Pancreas (tissue), 10 donors: ENCODE measurements at regions of chr11 and their contacts with region 1.

Region 1: DNA sequence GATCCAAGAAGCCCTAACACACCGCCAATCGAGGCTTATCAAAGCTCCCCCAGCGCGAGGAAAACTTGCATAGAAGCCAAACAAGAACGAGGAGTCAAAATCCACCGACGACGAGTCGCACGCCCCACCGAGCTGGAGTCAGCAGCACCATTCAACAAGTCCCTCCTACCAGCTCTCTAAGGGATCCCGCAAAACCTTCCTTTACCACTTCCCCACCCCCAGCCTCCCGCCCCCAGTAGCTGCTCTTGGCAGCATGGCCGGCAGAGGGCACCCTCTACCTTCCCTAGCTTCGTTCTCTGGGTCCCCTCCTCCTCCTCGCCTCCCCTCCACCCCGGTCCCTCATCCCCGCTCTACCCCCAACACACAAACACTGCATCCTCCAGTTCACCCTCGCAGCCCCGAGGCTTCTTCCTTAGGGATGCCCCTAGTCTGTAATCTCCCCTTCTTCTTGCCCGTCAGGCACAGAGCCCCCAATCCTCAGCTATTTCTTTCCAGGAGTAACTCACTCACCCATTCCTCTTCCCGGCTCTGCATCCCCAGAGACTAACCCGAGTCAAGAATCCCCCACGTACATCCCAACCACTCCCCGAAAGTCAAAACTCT is 1.3 kb downstream of the BDNF start:
- DNase-seq: peak; percentile 56 to 86 (median 72)
- ATAC-seq: peak; percentile 83 to 93 (median 92)
- H3K4me3 ChIP-seq: peak overlapping the region in 1 of 4 donors; percentile 60
- H3K27ac ChIP-seq: no peak overlapping the region
- H3K4me1 ChIP-seq: peaks cover 4 to 15% (median 13%) of the 10 kb centered on the region in 3 donors
- H3K27me3 ChIP-seq: peaks cover 0 to 28% (median 8%) of the 10 kb centered on the region in 4 donors
- CTCF ChIP-seq: peak; percentile 57 to 72 (median 64)

Region 2: GRCh38 chr11:28529540-28530410 is 830.8 kb after region 1 on chr11:
- intact Hi-C with region 1: loop called in 2 of 3 experiments (anchors 5 to 10 kb)
- DNase-seq: no peak
- ATAC-seq: peak in 2 of 4 donors; percentile 55 to 63
- H3K4me3 ChIP-seq: no peak overlapping the region
- H3K27ac ChIP-seq: no peak overlapping the region
- H3K4me1 ChIP-seq: no peaks in the 10 kb centered on the region
- H3K27me3 ChIP-seq: no peaks in the 10 kb centered on the region
- CTCF ChIP-seq: peak in 3 of 4 donors; percentile 13 to 27 (median 20)

Region 3: GRCh38 chr11:28701760-28702449 is 1002.9 kb after region 1 on chr11:
- intact Hi-C with region 1: loop called in 1 of 3 experiments (anchors 10 kb)
- DNase-seq: peak in 2 of 6 donors; percentile 9 to 28
- ATAC-seq: peak in 2 of 4 donors; percentile 52 to 66
- H3K4me3 ChIP-seq: no peak overlapping the region
- H3K27ac ChIP-seq: no peak overlapping the region
- H3K4me1 ChIP-seq: no peaks in the 10 kb centered on the region
- H3K27me3 ChIP-seq: no peaks in the 10 kb centered on the region
- CTCF ChIP-seq: no peak

Region 4: DNA sequence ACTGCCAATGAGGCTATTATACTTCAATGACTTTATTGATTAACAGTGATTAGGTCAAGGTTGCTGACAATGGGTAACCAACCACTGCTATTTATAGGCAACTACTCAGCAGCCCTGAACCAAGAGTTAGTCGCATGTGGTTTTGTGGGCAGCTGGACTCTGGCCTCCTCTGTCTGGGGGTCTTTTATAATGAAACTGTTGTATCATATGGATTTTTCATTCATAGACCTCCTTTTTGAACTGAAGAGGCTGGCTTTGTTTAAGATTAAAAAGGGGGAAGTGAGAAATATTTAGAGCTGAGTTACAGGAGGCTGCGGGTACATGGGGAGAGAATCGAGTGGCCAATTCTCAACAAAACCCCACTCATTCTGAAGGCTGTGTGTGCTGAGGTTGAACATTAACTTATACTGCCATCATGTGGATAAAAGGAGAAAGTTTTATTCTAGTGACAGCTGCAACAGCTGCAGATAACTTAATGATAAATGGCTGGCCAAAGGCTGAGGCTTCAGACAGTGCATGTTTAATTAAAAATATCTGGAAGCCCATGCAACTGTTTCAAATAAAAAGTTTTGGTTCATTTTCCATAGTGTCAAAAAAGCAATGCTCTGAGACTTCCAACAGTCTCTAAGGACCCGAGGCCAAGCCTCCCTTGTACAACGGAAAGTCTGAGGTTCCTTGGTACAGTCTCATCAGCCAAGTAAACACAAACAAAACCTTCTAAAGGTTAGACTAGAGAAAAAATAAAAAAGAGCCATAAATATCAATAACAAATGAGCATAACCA is 1635.2 kb after region 1 on chr11:
- intact Hi-C with region 1: loop called in 2 of 3 experiments (anchors 5 to 10 kb)
- DNase-seq: no peak
- ATAC-seq: peak in 3 of 4 donors; percentile 55 to 76 (median 62)
- H3K4me3 ChIP-seq: no peak overlapping the region
- H3K27ac ChIP-seq: no peak overlapping the region
- H3K4me1 ChIP-seq: peaks cover 0 to 6% (median 0%) of the 10 kb centered on the region in 3 donors
- H3K27me3 ChIP-seq: no peaks in the 10 kb centered on the region
- CTCF ChIP-seq: no peak